PC-9 (cell line): ENCODE measurements at regions of chr19 and their contacts with region 1.

Region 1: DNA sequence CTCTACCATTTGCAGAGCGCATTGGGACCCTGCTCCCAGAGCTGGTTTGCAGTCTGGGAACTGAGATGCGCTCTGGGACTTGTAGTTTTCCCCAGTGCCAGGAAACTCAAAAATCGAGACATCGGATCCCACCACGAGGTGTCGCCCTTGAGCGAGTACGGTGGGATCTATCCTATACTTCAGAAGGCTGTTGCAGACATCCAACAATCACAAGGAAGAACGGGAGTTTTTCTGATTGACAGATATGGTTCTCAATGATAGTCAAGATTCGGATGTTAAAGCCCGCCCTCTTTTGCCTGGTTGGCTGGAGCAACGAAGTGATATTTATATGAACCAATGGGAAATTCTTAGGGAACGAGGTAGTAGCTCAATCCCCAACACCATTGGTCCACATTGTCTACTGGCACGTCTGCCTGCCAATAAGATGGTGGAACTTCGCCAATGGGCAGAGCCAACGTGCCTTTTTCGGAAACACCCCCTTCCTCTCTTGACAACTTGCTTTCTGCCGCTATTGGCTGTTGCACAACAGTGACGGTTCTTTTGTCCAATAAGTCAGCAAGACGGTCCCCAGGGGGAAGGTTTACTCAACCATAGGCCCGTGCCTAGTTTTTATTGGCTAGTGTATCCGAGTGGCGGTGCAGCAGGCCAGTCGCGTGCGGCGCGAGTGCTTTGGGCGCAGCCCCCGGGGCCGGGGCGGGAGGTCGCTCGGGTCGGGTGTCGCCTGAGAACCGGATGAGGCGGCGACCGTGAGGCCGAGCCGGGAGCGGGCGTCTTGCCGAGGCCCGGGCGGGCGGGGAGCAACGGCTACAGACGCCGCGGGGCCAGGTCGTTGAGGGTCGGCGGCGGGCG is at the start of gene DNM2:
- DNase-seq: peak; percentile 99 to 100
- H3K4me3 ChIP-seq: peak within 1 kb of the TSS; percentile 95
- H3K27ac ChIP-seq: no peak within 1 kb of the TSS
- H3K4me1 ChIP-seq: peaks cover 12% of the 10 kb centered on the region
- H3K27me3 ChIP-seq: no peaks in the 10 kb centered on the region
- CTCF ChIP-seq: peak; percentile 87
- total RNA-seq, gene DNM2: 169 and 188 TPM in 2 replicates

Region 2: GRCh38 chr19:10416380-10417257 is 301.0 kb before region 1 on chr19:
- CTCF ChIA-PET with region 1: no interaction called
- POLR2A ChIA-PET with region 1: no interaction called
- intact Hi-C with region 1: loop called (anchors 5 kb)
- DNase-seq: peak; percentile 80 to 93
- H3K4me3 ChIP-seq: peak overlapping the region; percentile 66
- H3K27ac ChIP-seq: no peak overlapping the region
- H3K4me1 ChIP-seq: peaks cover 13% of the 10 kb centered on the region; the same call in 1 of the 2 replicates
- H3K27me3 ChIP-seq: peaks cover 45% of the 10 kb centered on the region
- CTCF ChIP-seq: peak; percentile 97

Region 3: DNA sequence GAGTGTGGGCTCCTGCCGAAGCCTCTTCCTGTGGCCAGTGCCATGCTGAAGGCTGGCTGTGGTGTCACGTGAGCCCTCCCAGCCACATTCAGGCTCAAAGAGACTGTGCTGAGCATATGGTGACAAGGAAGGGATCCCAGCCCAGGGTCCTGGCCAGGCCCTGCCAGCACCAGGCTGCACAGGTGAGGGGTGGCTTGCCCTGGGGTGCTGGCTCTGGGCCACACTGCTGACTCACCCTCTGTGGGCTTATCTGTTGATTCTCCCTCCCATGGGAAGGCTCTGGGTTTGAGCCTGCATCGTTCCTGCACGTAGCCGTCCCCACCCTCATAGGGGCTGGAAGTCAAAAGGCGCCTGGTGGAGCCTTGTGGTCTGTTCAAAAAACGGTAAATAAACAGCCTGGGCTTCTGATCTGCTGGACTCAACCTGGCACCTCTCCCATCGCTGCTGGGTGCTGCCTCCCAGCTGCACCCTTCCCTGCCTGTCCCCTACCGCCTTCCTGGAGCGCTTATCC is 31.4 kb after region 1 on chr19:
- CTCF ChIA-PET with region 1: no interaction called
- POLR2A ChIA-PET with region 1: interaction called, 4 read pairs
- intact Hi-C with region 1: loop called (anchors 1 kb)
- DNase-seq: peak; percentile 96 to 98
- H3K4me3 ChIP-seq: peak overlapping the region; percentile 29; the same call in 1 of the 2 replicates
- H3K27ac ChIP-seq: peak overlapping the region; percentile 83
- H3K4me1 ChIP-seq: peaks cover 48% of the 10 kb centered on the region
- H3K27me3 ChIP-seq: no peaks in the 10 kb centered on the region
- CTCF ChIP-seq: no peak

Region 4: DNA sequence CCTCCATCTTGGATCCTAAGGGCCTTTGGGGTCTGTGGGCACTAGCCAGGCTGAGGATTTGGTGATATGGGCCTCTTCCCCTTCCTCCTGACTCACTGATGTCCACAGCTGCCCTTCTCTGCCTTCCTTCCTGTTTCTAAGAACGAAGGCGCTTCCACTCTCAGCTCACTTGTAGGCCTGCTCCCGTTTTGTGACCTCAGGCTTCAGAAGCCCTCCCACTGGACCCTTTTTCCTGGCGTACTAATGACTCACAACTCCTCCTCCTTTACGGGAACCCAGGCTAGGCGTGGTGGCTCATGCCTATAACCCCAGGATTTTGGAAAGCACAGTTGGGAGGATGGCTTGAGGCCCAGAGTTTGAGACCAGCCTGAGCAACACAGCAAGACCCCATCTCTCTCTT is 62.8 kb after region 1 on chr19:
- CTCF ChIA-PET with region 1: interaction called, 12 read pairs
- POLR2A ChIA-PET with region 1: no interaction called
- intact Hi-C with region 1: no loop called
- DNase-seq: no peak
- H3K4me3 ChIP-seq: no peak overlapping the region
- H3K27ac ChIP-seq: no peak overlapping the region
- H3K4me1 ChIP-seq: no peaks in the 10 kb centered on the region
- H3K27me3 ChIP-seq: no peaks in the 10 kb centered on the region
- CTCF ChIP-seq: no peak

Region 5: DNA sequence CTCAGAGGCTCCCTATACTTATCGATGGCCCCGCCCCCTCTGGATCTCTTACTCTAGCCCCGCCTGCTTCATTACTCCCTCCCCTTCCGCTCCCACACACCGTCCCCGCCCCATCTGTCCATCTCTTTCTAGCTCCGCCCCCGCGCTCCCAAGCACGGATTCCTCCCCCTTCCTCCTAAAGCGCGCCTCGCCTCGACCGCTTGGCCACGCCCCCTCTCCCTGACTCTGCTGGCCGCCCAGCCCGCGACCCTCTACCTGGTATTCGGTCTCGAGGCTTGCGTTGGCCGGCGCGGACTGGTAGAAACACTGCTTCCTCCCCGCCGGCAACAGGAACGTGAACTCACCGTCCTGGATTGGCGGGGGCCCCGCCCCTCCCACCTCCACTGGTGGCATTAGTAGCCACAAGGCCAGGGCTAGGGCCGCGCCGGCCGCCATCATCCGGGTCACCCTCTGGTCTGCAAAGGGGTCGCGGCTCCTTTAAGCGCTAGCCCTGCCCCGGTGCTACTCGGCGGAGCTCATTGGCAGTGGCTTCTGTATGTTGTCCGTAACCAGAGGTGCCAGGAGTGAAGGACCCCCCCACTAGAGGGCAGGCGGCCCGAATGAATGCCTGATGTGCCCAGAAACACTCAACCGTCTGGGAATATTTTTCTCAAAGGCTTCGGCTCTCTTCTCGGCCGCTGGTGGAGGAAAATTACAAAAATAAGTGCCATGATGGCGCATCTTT is 118.3 kb after region 1 on chr19 and contains the start of gene TMED1:
- CTCF ChIA-PET with region 1: interaction called, 13 read pairs
- POLR2A ChIA-PET with region 1: interaction called, 5 read pairs
- intact Hi-C with region 1: loop called (anchors 1 kb)
- DNase-seq: peak; percentile 94 to 98
- H3K4me3 ChIP-seq: peak within 1 kb of the TSS; percentile 62
- H3K27ac ChIP-seq: peak within 1 kb of the TSS; percentile 89
- H3K4me1 ChIP-seq: peaks cover 13% of the 10 kb centered on the region
- H3K27me3 ChIP-seq: no peaks in the 10 kb centered on the region
- CTCF ChIP-seq: peak; percentile 56
- total RNA-seq, gene TMED1: 21.3 and 31.4 TPM in 2 replicates

Region 6: GRCh38 chr19:11203194-11204075 is 485.9 kb after region 1 on chr19:
- CTCF ChIA-PET with region 1: no interaction called
- POLR2A ChIA-PET with region 1: interaction called, 17 read pairs
- intact Hi-C with region 1: no loop called
- DNase-seq: peak; percentile 69 to 75
- H3K4me3 ChIP-seq: no peak overlapping the region
- H3K27ac ChIP-seq: no peak overlapping the region
- H3K4me1 ChIP-seq: peaks cover 18% of the 10 kb centered on the region
- H3K27me3 ChIP-seq: no peaks in the 10 kb centered on the region
- CTCF ChIP-seq: peak; percentile 94